ENCODE measurements at regions of chr19 and their contacts with region 1.

Region 1: DNA sequence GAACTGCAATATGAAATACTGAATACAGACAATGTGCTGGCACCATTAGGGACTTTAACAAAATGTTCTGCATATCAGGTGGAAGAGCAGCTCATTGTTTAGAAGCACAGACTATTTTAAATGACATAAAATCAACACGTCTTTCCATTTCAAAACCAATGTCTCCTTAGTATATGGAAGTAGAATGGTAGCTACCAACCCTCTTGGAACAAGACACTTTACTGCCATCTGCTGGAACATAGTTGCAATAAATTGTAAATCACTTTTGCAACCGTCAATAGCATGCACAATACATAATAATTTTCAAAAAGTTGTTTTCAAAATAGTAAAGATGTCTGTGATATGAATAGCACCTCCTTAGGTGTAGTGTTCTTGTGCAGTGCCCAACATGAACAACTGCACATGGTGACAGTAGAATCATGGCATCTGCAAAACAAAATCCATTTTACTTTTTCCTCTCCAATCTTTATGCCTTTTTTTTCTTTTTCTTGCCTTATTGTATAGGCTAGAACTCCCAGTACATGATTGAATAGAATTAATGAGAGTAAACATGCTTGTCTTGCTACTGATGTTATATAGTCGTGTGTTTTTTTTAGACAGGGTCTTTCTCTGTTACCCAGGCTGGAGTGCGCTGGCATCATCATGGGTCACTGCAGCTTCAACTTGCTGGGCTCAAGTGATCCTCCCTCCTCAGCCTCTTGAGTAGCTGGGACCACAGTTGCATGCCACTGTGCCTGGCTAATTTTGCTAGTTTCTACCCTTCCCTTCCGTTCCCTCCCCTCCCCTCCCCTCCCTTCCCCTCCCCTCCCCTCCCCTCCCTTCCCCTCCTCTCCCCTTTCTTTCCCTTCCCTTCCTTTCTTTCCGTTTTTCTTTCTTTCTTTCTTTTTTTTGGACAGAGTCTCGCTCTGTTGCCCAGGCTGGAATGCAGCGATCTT is 7.8 kb upstream of the LYPD5 start:
- DNase-seq: no peak
- H3K4me3 Mint-ChIP-seq: no peak overlapping the region
- H3K27ac Mint-ChIP-seq: no peak overlapping the region
- H3K4me1 Mint-ChIP-seq: no peaks in the 10 kb centered on the region
- H3K27me3 Mint-ChIP-seq: no peaks in the 10 kb centered on the region
- CTCF ChIP-seq: peak; percentile 45

Region 2: DNA sequence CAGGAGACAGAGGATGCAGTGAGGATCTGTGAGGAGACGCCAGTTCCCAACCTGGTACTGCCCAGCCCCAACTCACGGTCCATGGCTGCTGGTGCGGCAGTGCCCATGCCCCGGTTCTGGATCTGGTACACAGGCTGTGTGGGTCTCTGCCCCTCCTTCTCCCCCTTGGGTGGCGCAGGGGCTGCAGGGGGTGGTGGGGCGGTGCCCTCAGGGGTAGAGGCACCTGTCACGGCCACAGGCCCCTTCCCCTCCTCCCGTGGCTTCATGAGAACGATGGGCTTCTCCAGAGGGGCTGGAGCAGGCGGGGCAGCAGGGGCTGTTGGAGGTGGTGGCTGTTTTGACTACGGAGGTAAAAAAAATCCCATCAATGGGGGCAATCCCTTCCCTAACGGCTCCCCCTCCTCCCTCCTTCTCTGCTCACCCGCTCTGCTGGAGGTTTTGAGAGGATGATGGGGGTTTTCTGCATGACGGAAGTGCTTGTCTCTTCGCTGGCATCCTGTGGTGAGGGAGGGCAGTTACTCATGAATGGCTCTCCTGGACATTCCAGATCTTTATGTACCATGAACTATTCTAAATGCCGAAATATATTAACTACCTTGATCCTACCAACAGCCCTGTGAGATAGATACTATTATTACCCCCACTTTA is 62.3 kb before region 1 on chr19:
- CTCF ChIA-PET with region 1: interaction called, 34 read pairs
- intact Hi-C with region 1: loop called (anchors 2 kb)
- DNase-seq: no peak
- H3K4me3 Mint-ChIP-seq: no peak overlapping the region
- H3K27ac Mint-ChIP-seq: no peak overlapping the region
- H3K4me1 Mint-ChIP-seq: peaks cover 3% of the 10 kb centered on the region
- H3K27me3 Mint-ChIP-seq: no peaks in the 10 kb centered on the region
- CTCF ChIP-seq: no peak

Region 3: GRCh38 chr19:43754503-43755255 is 55.4 kb before region 1 on chr19 and contains the start of gene SMG9:
- CTCF ChIA-PET with region 1: interaction called, 3 read pairs
- intact Hi-C with region 1: loop called (anchors 2 kb)
- DNase-seq: peak; percentile 99
- H3K4me3 Mint-ChIP-seq: peak within 1 kb of the TSS; percentile 87
- H3K27ac Mint-ChIP-seq: peak within 1 kb of the TSS; percentile 95
- H3K4me1 Mint-ChIP-seq: peaks cover 48% of the 10 kb centered on the region
- H3K27me3 Mint-ChIP-seq: no peaks in the 10 kb centered on the region
- CTCF ChIP-seq: no peak
- total RNA-seq, gene SMG9: 69.1 and 85.5 TPM in 2 replicates

Region 4: DNA sequence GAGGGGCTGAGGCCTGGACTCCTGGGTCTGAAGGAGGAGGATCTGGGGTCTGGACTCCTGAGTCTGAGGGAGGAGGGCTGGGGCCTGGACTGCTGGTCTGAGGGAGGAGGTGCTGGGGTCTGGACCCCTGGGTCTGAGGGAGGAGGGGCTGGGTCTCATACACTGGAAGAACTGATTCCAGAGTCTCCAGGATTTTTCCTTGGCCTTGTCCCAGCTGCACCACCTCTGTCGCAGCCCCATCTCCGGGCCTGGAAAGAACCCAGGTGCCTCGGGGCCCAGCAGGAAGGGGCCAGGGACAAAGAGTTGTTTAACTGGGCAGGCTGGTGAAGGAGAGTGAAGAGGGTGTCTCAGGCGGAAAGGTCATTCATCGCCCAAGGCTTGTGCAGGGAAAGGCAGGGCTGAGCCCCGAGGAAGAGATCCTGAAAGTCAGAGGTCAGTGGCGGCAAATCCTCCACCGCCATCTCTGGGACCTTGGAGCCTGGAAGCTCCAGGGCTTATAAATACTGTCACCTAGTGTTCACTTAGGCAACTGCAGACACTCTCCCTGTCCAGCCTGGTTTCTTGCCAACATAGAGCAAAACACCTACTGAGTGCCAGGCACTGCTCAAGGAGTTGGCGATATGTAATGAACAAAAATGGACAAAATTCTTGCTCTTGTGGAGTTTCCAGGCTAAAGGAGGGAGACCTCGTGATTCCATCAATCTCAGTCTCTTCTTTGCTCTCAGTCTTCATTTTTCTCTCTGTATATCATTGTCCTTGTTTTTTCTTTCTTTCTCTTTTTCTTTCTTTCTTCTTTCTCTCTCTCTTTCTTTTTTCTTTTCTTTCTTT is 24.8 kb before region 1 on chr19:
- CTCF ChIA-PET with region 1: interaction called, 6 read pairs
- intact Hi-C with region 1: loop called (anchors 2 kb)
- DNase-seq: peak; percentile 81
- H3K4me3 Mint-ChIP-seq: peak overlapping the region; percentile 10
- H3K27ac Mint-ChIP-seq: peak overlapping the region; percentile 61
- H3K4me1 Mint-ChIP-seq: peaks cover 55% of the 10 kb centered on the region
- H3K27me3 Mint-ChIP-seq: no peaks in the 10 kb centered on the region
- CTCF ChIP-seq: peak; percentile 97

Region 5: DNA sequence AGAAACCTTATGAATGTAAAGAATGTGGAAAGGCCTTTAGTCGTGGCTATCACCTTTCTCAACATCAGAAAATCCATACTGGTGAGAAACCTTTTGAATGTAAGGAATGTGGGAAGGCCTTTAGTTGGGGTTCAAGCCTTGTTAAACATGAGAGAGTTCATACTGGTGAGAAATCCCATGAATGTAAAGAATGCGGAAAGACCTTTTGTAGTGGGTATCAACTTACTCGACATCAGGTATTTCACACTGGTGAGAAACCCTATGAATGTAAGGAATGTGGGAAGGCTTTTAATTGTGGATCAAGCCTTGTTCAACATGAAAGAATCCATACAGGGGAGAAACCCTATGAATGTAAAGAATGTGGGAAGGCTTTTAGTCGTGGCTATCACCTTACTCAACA is 37.9 kb after region 1 on chr19:
- CTCF ChIA-PET with region 1: no interaction called
- intact Hi-C with region 1: no loop called
- DNase-seq: no peak
- H3K4me3 Mint-ChIP-seq: no peak overlapping the region
- H3K27ac Mint-ChIP-seq: no peak overlapping the region
- H3K4me1 Mint-ChIP-seq: no peaks in the 10 kb centered on the region
- H3K27me3 Mint-ChIP-seq: no peaks in the 10 kb centered on the region
- CTCF ChIP-seq: no peak

Region 6: GRCh38 chr19:43872547-43873336 is 62.7 kb after region 1 on chr19:
- CTCF ChIA-PET with region 1: no interaction called
- intact Hi-C with region 1: no loop called
- DNase-seq: no peak
- H3K4me3 Mint-ChIP-seq: no peak overlapping the region
- H3K27ac Mint-ChIP-seq: no peak overlapping the region
- H3K4me1 Mint-ChIP-seq: no peaks in the 10 kb centered on the region
- H3K27me3 Mint-ChIP-seq: no peaks in the 10 kb centered on the region
- CTCF ChIP-seq: no peak

Measured in Calu3 (cell line).